ENCODE measurements at regions of chr3 and their contacts with region 1.

Region 1: GRCh38 chr3:20160230-20160629 is 25.8 kb downstream of the SGO1 start:
- DNase-seq: no peak
- ATAC-seq: no peak
- H3K4me3 ChIP-seq: no peak overlapping the region
- H3K27ac ChIP-seq: no peak overlapping the region
- H3K4me1 ChIP-seq: no peaks in the 10 kb centered on the region
- H3K27me3 ChIP-seq: no peaks in the 10 kb centered on the region
- CTCF ChIP-seq: no peak
- EP300 ChIP-seq: no peak
- POLR2A ChIP-seq: no peak
- RAD21 ChIP-seq: no peak

Region 2: DNA sequence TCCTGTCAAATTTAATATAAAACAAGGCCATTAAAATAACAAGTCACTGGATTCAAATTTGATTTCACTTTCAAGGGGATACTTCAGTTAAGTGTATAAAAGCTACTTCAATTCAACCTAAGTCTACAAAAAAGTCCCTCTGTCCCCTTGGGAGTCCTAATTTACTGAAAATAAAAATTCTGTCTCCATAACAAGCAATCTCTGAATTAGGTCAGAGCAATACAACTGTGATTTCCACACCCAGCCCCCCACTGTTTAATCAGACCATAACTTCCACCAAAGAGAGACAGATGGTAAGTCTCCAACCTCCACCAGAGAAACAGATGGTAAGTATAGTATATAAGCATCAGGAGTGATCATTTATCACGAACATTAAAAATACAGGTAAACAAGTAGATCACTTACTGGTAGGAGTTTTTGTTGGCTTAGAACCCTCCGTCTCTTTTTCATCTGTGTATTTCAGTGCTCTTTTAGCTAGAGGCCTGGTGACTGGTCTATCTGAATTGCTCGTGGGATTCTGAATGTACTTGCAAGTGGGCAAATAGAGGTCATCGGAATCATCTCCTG is 13.7 kb after region 1 on chr3:
- CTCF ChIA-PET with region 1: interaction called, 3 read pairs
- POLR2A ChIA-PET with region 1: interaction called, 10 read pairs
- RAD21 ChIA-PET with region 1: interaction called, 3 read pairs
- SMC1A ChIA-PET with region 1: interaction called, 9 read pairs
- in situ Hi-C with region 1: no loop called
- intact Hi-C with region 1: no loop called
- DNase-seq: no peak
- ATAC-seq: no peak
- H3K4me3 ChIP-seq: no peak overlapping the region
- H3K27ac ChIP-seq: no peak overlapping the region
- H3K4me1 ChIP-seq: no peaks in the 10 kb centered on the region
- H3K27me3 ChIP-seq: no peaks in the 10 kb centered on the region
- CTCF ChIP-seq: no peak
- EP300 ChIP-seq: no peak
- POLR2A ChIP-seq: no peak
- RAD21 ChIP-seq: no peak

Region 3: GRCh38 chr3:20232906-20233780 is 72.9 kb after region 1 on chr3:
- CTCF ChIA-PET with region 1: no interaction called
- POLR2A ChIA-PET with region 1: no interaction called
- RAD21 ChIA-PET with region 1: no interaction called
- SMC1A ChIA-PET with region 1: no interaction called
- in situ Hi-C with region 1: no loop called
- intact Hi-C with region 1: no loop called
- DNase-seq: no peak
- ATAC-seq: no peak
- H3K4me3 ChIP-seq: no peak overlapping the region
- H3K27ac ChIP-seq: no peak overlapping the region
- H3K4me1 ChIP-seq: no peaks in the 10 kb centered on the region
- H3K27me3 ChIP-seq: no peaks in the 10 kb centered on the region
- CTCF ChIP-seq: no peak
- EP300 ChIP-seq: no peak
- POLR2A ChIP-seq: no peak
- RAD21 ChIP-seq: no peak